AG04449 (cell line): ENCODE measurements at regions of chr12 and their contacts with region 1.

Region 1: DNA sequence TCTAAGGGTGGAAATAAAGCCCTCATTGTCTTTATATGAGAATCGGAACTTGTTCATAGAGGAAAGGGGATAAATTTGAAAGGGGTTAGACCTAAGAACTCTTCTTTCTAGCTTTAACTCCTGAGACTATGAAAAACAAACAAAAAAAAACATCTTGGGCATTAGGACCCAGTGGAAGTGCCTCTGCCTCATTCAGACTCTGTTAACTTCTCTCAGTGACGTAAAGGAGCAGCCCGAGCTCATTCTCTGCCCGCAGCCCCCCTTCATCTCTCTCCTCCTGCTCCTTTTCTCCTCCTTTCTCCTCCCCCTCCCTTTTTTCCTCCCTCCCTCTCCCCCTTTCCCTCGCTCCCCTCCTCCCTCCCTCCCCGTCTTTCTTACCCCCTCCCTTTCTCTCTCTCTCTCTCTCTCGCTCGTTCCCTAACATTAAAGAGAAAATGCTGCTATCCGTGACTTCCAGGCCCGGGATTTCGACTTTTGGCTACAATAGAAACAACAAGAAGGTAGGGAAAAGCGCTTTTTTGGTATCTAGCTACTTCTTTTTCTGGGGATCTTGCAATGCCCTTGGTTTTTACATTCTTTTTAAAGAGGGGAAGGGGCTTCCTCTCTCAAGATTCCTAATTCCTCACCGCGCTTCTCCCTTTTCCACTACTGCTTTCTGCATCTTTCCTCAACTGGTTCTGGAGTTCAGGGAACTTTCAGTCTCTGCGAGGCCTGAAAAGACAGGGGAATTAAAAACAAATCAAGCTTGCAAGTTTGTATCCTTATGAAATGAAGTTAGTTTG is at the start of gene RBMS2:
- DNase-seq: peak; percentile 63
- H3K4me3 ChIP-seq: peak within 1 kb of the TSS; percentile 60
- CTCF ChIP-seq: no peak

Region 2: DNA sequence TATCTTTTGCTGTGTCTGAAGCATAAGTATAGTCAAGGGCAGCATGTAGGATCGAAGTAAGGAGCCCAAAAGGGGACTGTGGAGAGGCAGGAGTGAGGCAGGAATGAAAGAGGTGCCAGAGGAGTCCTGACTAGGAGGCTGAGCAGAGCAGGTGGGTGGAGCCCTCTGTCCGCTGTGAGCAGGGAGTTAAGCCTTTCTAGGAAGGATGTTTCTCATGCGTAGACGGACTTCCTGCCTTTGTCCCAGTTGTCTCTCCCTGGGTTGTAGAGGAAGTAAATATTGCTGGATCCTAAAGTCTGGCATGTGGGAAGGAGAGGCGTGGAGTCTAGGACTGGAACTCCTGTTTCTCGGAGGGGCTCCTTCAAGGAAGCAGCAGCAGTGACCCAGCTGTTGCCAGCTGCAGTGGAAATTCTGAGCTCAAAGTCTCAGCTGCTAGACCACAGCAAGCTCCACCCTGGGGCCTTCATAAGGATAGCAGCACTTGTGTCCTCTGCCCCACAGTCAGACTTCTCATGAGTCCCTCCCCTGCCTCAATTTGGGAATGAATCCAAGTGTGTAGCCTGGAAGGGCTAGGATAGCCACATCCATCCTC is 43.8 kb after region 1 on chr12:
- CTCF ChIA-PET with region 1: interaction called, 93 read pairs
- POLR2A ChIA-PET with region 1: no interaction called
- DNase-seq: peak; percentile 5
- H3K4me3 ChIP-seq: no peak overlapping the region
- CTCF ChIP-seq: no peak

Region 3: DNA sequence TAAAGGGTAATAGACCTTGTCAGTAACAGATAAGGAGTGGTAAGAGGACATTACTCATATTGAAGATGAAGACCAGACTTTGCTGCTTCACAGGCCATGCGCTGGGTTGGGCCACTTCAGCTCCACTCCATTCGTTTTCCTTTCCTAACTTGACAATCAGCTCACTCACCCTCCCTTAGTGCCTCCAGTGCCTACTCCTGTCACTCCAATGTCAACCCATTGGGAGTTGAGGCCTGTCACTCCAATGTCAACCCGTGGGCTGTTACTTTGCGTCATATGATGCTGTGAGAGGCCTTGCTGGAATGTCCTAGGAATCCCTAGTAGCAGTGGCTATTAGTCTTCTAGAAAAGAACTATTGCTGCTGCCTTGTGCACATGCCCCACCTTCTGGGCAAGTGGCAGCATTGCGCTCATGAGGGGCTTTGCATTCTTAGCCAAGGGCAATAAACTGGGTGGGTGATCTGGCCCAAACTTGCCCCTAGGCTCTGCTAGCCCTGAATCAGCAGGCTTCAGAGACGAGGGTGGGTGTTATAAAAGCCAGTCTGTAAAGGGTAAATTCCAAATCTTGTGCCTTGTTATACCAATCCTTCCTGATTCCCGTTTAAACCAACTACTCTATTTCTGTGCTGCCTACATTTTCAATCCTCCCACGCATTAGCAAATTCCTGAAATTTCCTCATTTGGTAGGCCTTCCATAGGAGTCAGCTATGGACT is 72.3 kb after region 1 on chr12:
- CTCF ChIA-PET with region 1: interaction called, 248 read pairs
- POLR2A ChIA-PET with region 1: no interaction called
- DNase-seq: peak; percentile 46
- H3K4me3 ChIP-seq: no peak overlapping the region
- CTCF ChIP-seq: peak; percentile 89

Region 4: GRCh38 chr12:57319678-57320469 is 798.1 kb after region 1 on chr12:
- CTCF ChIA-PET with region 1: no interaction called
- POLR2A ChIA-PET with region 1: no interaction called
- DNase-seq: no peak
- H3K4me3 ChIP-seq: no peak overlapping the region
- CTCF ChIP-seq: no peak